ENCODE measurements at regions of chr3 and their contacts with region 1.

Region 1: GRCh38 chr3:32973982-32974381 is 22.5 kb downstream of the CCR4 start:
- DNase-seq: peak; percentile 54 to 72 (median 62)
- H3K4me3 ChIP-seq: no peak overlapping the region
- H3K4me3 Mint-ChIP-seq: peak overlapping the region in 7 of 8 donors; percentile 47 to 85 (median 72)
- H3K27ac ChIP-seq: peak overlapping the region; percentile 14
- H3K27ac Mint-ChIP-seq: peak overlapping the region; percentile 62 to 93 (median 87)
- H3K4me1 ChIP-seq: peaks cover 48% of the 10 kb centered on the region
- H3K4me1 Mint-ChIP-seq: peaks cover 40 to 66% (median 46%) of the 10 kb centered on the region in 4 donors
- H3K27me3 ChIP-seq: no peaks in the 10 kb centered on the region
- H3K27me3 Mint-ChIP-seq: no peaks in the 10 kb centered on the region

Region 2: GRCh38 chr3:32913790-32914446 is 60.1 kb before region 1 on chr3:
- CTCF ChIA-PET with region 1: no interaction called
- POLR2A ChIA-PET with region 1: no interaction called
- intact Hi-C with region 1: no loop called
- DNase-seq: no peak
- H3K4me3 ChIP-seq: no peak overlapping the region
- H3K4me3 Mint-ChIP-seq: no peak overlapping the region
- H3K27ac ChIP-seq: no peak overlapping the region
- H3K27ac Mint-ChIP-seq: peak overlapping the region in 2 of 7 donors; percentile 3 to 38
- H3K4me1 ChIP-seq: peaks cover 10% of the 10 kb centered on the region
- H3K4me1 Mint-ChIP-seq: peaks cover 5 to 14% (median 9%) of the 10 kb centered on the region in 4 donors
- H3K27me3 ChIP-seq: no peaks in the 10 kb centered on the region
- H3K27me3 Mint-ChIP-seq: no peaks in the 10 kb centered on the region

Region 3: DNA sequence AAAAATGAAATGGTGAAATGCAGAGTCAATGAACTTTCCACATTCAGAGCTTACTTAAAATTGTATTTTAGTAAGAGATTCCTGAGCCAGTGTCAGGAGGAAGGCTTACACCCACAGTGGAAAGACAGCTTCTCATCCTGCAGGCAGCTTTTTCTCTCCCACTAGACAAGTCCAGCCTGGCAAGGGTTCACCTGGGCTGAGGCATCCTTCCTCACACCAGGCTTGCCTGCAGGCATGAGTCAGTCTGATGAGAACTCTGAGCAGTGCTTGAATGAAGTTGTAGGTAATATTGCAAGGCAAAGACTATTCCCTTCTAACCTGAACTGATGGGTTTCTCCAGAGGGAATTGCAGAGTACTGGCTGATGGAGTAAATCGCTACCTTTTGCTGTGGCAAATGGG is 19.5 kb before region 1 on chr3:
- CTCF ChIA-PET with region 1: interaction called, 8 read pairs
- POLR2A ChIA-PET with region 1: interaction called, 10 read pairs
- intact Hi-C with region 1: loop called (anchors 1 kb)
- DNase-seq: no peak
- H3K4me3 ChIP-seq: peak overlapping the region; percentile 37 to 66
- H3K4me3 Mint-ChIP-seq: peak overlapping the region; percentile 91 to 98 (median 95)
- H3K27ac ChIP-seq: peak overlapping the region; percentile 79
- H3K27ac Mint-ChIP-seq: peak overlapping the region; percentile 82 to 99 (median 97)
- H3K4me1 ChIP-seq: peaks cover 74% of the 10 kb centered on the region
- H3K4me1 Mint-ChIP-seq: peaks cover 39 to 82% (median 62%) of the 10 kb centered on the region in 4 donors
- H3K27me3 ChIP-seq: no peaks in the 10 kb centered on the region
- H3K27me3 Mint-ChIP-seq: no peaks in the 10 kb centered on the region

Region 4: DNA sequence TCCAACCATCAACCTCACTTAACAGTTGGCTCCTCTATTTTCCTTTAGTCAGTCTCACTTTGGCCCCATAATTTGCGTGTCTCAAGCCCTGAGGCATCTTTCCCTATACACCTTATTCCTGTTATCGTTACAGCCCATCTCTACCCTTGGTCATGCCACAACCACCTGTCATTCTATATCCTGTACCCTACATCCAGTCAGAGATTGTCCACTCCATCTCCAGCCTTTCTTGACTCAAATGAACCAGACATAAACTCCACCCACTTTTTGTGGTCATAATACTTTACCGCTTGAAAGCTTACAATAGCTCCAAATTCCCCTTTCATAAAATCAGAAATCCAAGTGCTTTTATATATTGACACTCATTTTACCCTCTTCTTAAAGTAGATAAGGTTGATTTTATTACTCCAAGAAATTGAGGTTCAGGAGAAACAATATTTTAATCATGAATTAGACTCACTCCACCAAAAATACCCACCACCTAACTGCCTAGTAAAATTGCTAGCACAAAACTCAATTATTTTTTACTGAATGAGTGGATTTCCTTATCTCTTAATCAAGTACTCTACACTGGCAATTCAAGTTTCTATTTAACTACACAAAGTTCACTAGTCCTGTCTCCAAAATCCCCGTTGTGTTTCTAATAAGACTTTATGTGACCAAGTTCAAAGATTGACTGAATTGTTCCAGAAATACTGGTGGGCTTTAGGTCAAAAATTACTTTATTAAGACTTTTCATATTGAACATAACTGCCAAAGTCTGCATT is 13.4 kb before region 1 on chr3:
- CTCF ChIA-PET with region 1: interaction called, 11 read pairs
- POLR2A ChIA-PET with region 1: interaction called, 38 read pairs
- intact Hi-C with region 1: no loop called
- DNase-seq: peak; percentile 45 to 66 (median 55)
- H3K4me3 ChIP-seq: no peak overlapping the region
- H3K4me3 Mint-ChIP-seq: peak overlapping the region in 7 of 8 donors; percentile 18 to 75 (median 64)
- H3K27ac ChIP-seq: peak overlapping the region; percentile 31
- H3K27ac Mint-ChIP-seq: peak overlapping the region; percentile 63 to 99 (median 92)
- H3K4me1 ChIP-seq: peaks cover 71% of the 10 kb centered on the region
- H3K4me1 Mint-ChIP-seq: peaks cover 35 to 66% (median 56%) of the 10 kb centered on the region in 4 donors
- H3K27me3 ChIP-seq: no peaks in the 10 kb centered on the region
- H3K27me3 Mint-ChIP-seq: no peaks in the 10 kb centered on the region

Region 5: GRCh38 chr3:32989171-32989570 is 15.2 kb after region 1 on chr3:
- CTCF ChIA-PET with region 1: interaction called, 12 read pairs
- POLR2A ChIA-PET with region 1: interaction called, 14 read pairs
- intact Hi-C with region 1: no loop called
- DNase-seq: no peak
- H3K4me3 ChIP-seq: no peak overlapping the region
- H3K4me3 Mint-ChIP-seq: peak overlapping the region; percentile 15 to 77 (median 60)
- H3K27ac ChIP-seq: peak overlapping the region; percentile 30
- H3K27ac Mint-ChIP-seq: peak overlapping the region; percentile 5 to 89 (median 83)
- H3K4me1 ChIP-seq: peaks cover 51% of the 10 kb centered on the region
- H3K4me1 Mint-ChIP-seq: peaks cover 36 to 56% (median 47%) of the 10 kb centered on the region in 4 donors
- H3K27me3 ChIP-seq: no peaks in the 10 kb centered on the region
- H3K27me3 Mint-ChIP-seq: no peaks in the 10 kb centered on the region

Region 6: GRCh38 chr3:32998631-32999451 is 24.9 kb after region 1 on chr3:
- CTCF ChIA-PET with region 1: interaction called, 3 read pairs
- POLR2A ChIA-PET with region 1: interaction called, 10 read pairs
- intact Hi-C with region 1: no loop called
- DNase-seq: peak in 1 of 5 donors; percentile 47
- H3K4me3 ChIP-seq: peak overlapping the region in 1 of 2 donors; percentile 6
- H3K4me3 Mint-ChIP-seq: peak overlapping the region in 7 of 8 donors; percentile 29 to 80 (median 61)
- H3K27ac ChIP-seq: peak overlapping the region; percentile 23
- H3K27ac Mint-ChIP-seq: peak overlapping the region; percentile 86 to 98 (median 93)
- H3K4me1 ChIP-seq: peaks cover 85% of the 10 kb centered on the region
- H3K4me1 Mint-ChIP-seq: peaks cover 54 to 93% (median 82%) of the 10 kb centered on the region in 4 donors
- H3K27me3 ChIP-seq: no peaks in the 10 kb centered on the region
- H3K27me3 Mint-ChIP-seq: no peaks in the 10 kb centered on the region

Measured in CD4-positive, alpha-beta memory T cell (primary cell).